T-cell (primary cell): ENCODE measurements at regions of chr2 and their contacts with region 1.

Region 1: GRCh38 chr2:3442185-3442584 is 62.7 kb downstream of the TRAPPC12 start:
- DNase-seq: no peak
- ATAC-seq: no peak
- H3K4me3 ChIP-seq: no peak overlapping the region
- H3K4me3 Mint-ChIP-seq: no peak overlapping the region
- H3K27ac ChIP-seq: no peak overlapping the region
- H3K27ac Mint-ChIP-seq: no peak overlapping the region
- H3K4me1 ChIP-seq: no peaks in the 10 kb centered on the region
- H3K4me1 Mint-ChIP-seq: peaks cover 22 to 35% (median 34%) of the 10 kb centered on the region in 3 donors
- H3K27me3 ChIP-seq: no peaks in the 10 kb centered on the region
- H3K27me3 Mint-ChIP-seq: no peaks in the 10 kb centered on the region

Region 2: DNA sequence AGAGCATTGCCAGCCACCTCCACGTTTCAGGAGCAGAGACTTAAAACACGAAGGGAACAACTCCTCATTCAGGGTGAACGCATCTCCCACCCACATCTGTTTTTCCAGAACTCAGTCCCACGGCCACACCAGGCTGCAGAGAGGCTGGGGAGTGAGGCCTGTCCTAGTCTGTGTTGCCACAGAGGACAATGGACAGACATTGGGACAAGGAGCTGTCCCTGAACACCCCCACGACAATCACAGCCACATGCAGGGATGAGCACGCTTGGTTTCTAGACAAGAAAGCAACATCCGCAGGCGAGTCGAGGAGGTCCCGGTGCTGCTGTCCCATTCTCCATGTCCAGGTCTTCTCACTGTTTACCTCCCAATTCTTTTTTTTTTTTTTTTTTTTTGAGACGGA is 231.9 kb before region 1 on chr2:
- CTCF ChIA-PET with region 1: no interaction called
- POLR2A ChIA-PET with region 1: interaction called in 1 of 2 experiments, 10 read pairs
- DNase-seq: no peak
- ATAC-seq: no peak
- H3K4me3 ChIP-seq: no peak overlapping the region
- H3K4me3 Mint-ChIP-seq: no peak overlapping the region
- H3K27ac ChIP-seq: no peak overlapping the region
- H3K27ac Mint-ChIP-seq: no peak overlapping the region
- H3K4me1 ChIP-seq: no peaks in the 10 kb centered on the region
- H3K4me1 Mint-ChIP-seq: peaks cover 5 to 8% (median 6%) of the 10 kb centered on the region in 3 donors
- H3K27me3 ChIP-seq: no peaks in the 10 kb centered on the region
- H3K27me3 Mint-ChIP-seq: no peaks in the 10 kb centered on the region

Region 3: GRCh38 chr2:3313781-3314375 is 128.3 kb before region 1 on chr2:
- CTCF ChIA-PET with region 1: no interaction called
- POLR2A ChIA-PET with region 1: no interaction called
- DNase-seq: no peak
- ATAC-seq: no peak
- H3K4me3 ChIP-seq: no peak overlapping the region
- H3K4me3 Mint-ChIP-seq: no peak overlapping the region
- H3K27ac ChIP-seq: no peak overlapping the region
- H3K27ac Mint-ChIP-seq: peak overlapping the region in 1 of 2 donors; percentile 81
- H3K4me1 ChIP-seq: peaks cover 0 to 15% of the 10 kb centered on the region in 2 experiments
- H3K4me1 Mint-ChIP-seq: peaks cover 20 to 27% (median 24%) of the 10 kb centered on the region in 3 donors
- H3K27me3 ChIP-seq: no peaks in the 10 kb centered on the region
- H3K27me3 Mint-ChIP-seq: no peaks in the 10 kb centered on the region